ENCODE measurements at regions of chr1 and their contacts with region 1.

Region 1: GRCh38 chr1:65067491-65068201 is 80.4 kb upstream of the AK4 start:
- DNase-seq: peak; percentile 89
- ATAC-seq: peak; percentile 48

Region 2: DNA sequence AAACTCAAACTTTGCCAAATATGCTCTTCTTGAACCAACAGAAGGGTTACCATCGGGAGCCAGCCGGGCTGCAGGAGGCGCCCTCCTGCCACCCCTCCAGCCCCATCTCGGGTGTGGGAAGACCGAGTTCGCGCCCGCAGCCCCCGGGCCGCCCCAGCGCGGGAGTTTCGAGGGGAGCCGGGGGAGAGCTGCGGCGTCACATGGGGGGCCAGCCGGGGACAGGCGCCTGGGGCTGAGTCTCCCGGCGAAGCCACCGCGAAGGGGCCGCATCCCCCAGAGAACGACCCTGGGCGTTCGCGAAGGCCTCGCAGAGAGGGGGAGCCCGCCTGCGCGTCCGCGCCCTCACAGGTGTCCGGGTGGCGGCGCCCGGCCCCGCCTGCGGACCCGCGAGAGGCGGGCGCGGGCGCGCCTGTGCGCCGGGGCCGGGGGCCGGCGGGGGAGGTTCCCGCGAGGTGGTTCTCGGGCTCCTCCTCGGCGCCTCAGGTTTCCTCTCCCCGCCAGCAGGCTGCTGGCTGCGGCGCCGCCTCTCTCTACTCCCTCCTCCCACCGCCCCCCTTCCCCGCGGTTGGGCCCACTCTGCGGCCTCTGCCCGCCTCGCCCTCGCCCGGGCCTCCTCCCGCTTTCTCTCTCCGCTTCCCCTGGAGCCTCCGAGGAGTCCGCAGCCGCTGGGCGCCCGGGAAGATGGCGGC is 323.0 kb before region 1 on chr1 and contains the start of gene RAVER2:
- intact Hi-C with region 1: loop called (anchors 10 kb)
- DNase-seq: peak; percentile 87
- ATAC-seq: peak; percentile 89
- total RNA-seq, gene RAVER2: 30.1 TPM

Region 3: GRCh38 chr1:64966158-64966971 is 101.3 kb before region 1 on chr1 and contains the start of gene JAK1:
- intact Hi-C with region 1: loop called (anchors 2 kb)
- DNase-seq: peak; percentile 95
- ATAC-seq: peak; percentile 93
- total RNA-seq, gene JAK1: 87.3 TPM

Region 4: GRCh38 chr1:65148548-65149350 is 81.1 kb after region 1 on chr1:
- intact Hi-C with region 1: loop called (anchors 2 kb)
- DNase-seq: peak; percentile 78
- ATAC-seq: peak; percentile 75

Region 5: GRCh38 chr1:65419681-65420589 is 352.3 kb after region 1 on chr1:
- intact Hi-C with region 1: loop called (anchors 2 kb)
- DNase-seq: peak; percentile 100
- ATAC-seq: peak; percentile 98